Psoas muscle (tissue), 8 donors: ENCODE measurements at regions of chr12 and their contacts with region 1.

Region 1: DNA sequence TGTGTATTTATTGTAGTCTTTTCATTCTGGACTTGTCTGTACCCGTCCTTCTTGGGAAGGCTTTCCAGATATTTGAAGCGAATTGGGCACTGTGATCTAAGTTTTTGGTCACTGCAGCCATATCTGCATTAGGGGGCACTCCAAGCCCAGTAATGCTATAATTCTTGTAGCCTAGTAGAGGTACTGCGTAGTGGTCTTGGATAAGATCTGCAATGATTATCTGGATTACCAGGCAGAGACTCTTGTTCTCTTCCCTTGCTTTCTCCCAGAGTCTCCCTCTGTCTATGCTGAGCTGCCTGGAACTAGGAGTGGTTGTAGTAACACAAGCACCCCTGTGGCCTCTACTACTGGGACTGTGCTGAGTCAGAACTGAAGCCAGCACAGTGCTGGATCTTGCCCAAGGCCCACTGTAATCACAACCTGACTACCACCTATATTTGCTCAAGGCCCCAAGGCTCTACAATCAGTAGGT is 30.0 kb downstream of the SLC38A2 start:
- DNase-seq: no peak
- ATAC-seq: peak; percentile 79 to 95 (median 86)
- H3K4me3 ChIP-seq: no peak overlapping the region
- H3K27ac ChIP-seq: no peak overlapping the region
- H3K4me1 ChIP-seq: peaks cover 9% of the 10 kb centered on the region
- H3K27me3 ChIP-seq: no peaks in the 10 kb centered on the region
- CTCF ChIP-seq: peak; percentile 69

Region 2: GRCh38 chr12:46777587-46777986 is 435.0 kb after region 1 on chr12:
- intact Hi-C with region 1: loop called in 1 of 2 experiments (anchors 5 kb)
- DNase-seq: no peak
- ATAC-seq: no peak
- H3K4me3 ChIP-seq: no peak overlapping the region
- H3K27ac ChIP-seq: peak overlapping the region; percentile 58
- H3K4me1 ChIP-seq: peaks cover 40% of the 10 kb centered on the region
- H3K27me3 ChIP-seq: no peaks in the 10 kb centered on the region
- CTCF ChIP-seq: no peak

Region 3: DNA sequence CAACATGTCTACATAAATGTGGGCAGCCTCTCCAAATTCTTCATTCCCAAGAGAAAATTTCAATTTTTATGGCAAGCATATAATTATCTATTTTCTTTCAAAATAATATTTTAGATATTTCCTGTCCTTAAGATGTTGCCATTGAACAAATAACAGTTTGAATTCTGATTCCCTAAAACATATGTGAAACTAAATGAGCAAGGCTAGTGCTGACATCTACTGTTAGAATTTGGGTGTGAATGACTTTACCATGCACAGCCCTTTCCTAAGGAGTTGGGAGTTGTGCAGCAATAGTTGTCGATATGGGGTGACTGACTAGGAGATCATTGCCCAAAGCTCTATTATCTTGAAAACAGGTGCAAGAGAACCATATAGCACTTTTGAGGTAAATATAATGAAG is 591.3 kb after region 1 on chr12:
- intact Hi-C with region 1: loop called (anchors 5 to 10 kb)
- DNase-seq: no peak
- ATAC-seq: peak; percentile 74 to 95 (median 84)
- H3K4me3 ChIP-seq: no peak overlapping the region
- H3K27ac ChIP-seq: no peak overlapping the region
- H3K4me1 ChIP-seq: peaks cover 4% of the 10 kb centered on the region
- H3K27me3 ChIP-seq: no peaks in the 10 kb centered on the region
- CTCF ChIP-seq: peak; percentile 68

Region 4: GRCh38 chr12:46983393-46984266 is 641.0 kb after region 1 on chr12:
- intact Hi-C with region 1: loop called in 1 of 2 experiments (anchors 2 kb)
- DNase-seq: no peak
- ATAC-seq: peak; percentile 81 to 95 (median 87)
- H3K4me3 ChIP-seq: no peak overlapping the region
- H3K27ac ChIP-seq: no peak overlapping the region
- H3K4me1 ChIP-seq: no peaks in the 10 kb centered on the region
- H3K27me3 ChIP-seq: no peaks in the 10 kb centered on the region
- CTCF ChIP-seq: peak; percentile 80

Region 5: GRCh38 chr12:47021298-47021697 is 678.7 kb after region 1 on chr12:
- intact Hi-C with region 1: loop called (anchors 1 to 10 kb)
- DNase-seq: no peak
- ATAC-seq: peak in 3 of 4 donors; percentile 49 to 66 (median 55)
- H3K4me3 ChIP-seq: no peak overlapping the region
- H3K27ac ChIP-seq: no peak overlapping the region
- H3K4me1 ChIP-seq: peaks cover 3% of the 10 kb centered on the region
- H3K27me3 ChIP-seq: no peaks in the 10 kb centered on the region
- CTCF ChIP-seq: peak; percentile 73